Psoas muscle (tissue), 8 donors: ENCODE measurements at regions of chr15 and their contacts with region 1.

Region 1: DNA sequence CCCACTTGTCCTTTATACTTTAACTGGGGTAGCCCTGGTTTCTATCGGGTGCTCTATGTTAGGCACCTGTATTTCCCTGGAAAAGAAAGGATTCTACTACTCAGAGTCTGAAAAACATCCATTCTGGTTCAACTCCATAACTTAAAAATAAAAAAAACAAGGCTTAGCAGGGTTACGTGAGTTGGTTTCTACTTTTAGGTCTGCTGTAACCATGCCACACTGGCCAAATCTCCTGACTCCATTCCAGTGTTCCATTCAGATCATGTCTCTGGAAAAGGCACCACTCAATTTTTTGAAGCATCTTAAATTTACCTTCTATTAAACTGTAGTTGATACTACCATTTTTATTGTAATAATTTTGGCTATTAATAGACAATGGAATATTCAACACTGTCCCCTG is 62.1 kb downstream of the CAPN3 start:
- DNase-seq: no peak
- ATAC-seq: peak; percentile 78 to 89 (median 82)
- H3K4me3 ChIP-seq: no peak overlapping the region
- H3K27ac ChIP-seq: peak overlapping the region; percentile 86
- H3K4me1 ChIP-seq: peaks cover 45% of the 10 kb centered on the region
- H3K27me3 ChIP-seq: no peaks in the 10 kb centered on the region
- CTCF ChIP-seq: no peak

Region 2: DNA sequence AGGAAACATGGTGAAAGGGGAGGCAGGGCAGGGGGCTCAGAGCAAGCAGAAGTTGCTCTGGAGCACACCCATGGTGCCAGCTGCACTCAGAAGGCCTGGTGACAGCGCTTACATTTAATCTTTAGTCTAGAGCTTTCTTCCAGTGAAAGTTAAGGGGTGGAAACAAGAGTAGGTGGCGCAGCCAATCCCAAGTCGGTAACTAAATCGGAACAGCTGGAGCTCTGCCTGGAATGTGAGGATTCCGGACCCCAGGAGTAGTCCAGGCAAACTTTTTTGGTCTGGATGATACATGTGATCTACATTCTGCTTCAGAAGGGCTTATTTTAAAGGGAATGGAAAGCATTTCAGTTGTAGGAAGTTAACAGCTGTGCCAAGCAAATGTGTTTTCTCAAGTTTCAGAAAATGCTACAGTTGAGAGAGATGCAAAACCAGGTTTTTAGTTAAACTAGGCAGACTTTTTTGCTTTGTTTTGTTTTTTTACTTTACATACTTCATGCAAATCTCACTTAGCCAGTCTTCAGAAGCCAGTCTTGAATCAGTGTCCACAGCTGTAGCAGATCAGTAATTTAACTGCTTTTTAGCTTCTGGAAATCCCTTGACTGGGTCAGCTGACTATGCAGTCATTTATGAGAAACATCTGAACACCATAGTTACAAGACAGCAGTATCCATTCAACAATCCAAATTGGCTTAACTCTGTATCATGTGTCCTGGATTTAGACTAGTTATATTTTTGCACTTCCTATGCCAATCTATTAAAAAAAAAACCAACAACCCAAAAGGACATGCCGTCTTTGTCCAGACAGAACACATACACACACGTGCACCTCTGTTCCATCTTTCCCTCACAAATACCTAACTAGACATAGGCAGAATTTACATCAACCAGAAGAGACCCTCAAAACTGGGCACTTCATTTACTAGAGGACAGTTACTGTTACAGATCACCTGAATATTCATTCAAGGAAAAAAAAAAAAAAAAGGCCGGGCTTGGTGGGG is 36.4 kb after region 1 on chr15:
- intact Hi-C with region 1: loop called in 1 of 2 experiments (anchors 5 kb)
- DNase-seq: peak; percentile 65 to 79
- ATAC-seq: peak; percentile 89 to 90 (median 90)
- H3K4me3 ChIP-seq: peak overlapping the region; percentile 61
- H3K27ac ChIP-seq: peak overlapping the region; percentile 90
- H3K4me1 ChIP-seq: peaks cover 39% of the 10 kb centered on the region
- H3K27me3 ChIP-seq: no peaks in the 10 kb centered on the region
- CTCF ChIP-seq: no peak